ENCODE measurements at regions of chr11 and their contacts with region 1.

Region 1: DNA sequence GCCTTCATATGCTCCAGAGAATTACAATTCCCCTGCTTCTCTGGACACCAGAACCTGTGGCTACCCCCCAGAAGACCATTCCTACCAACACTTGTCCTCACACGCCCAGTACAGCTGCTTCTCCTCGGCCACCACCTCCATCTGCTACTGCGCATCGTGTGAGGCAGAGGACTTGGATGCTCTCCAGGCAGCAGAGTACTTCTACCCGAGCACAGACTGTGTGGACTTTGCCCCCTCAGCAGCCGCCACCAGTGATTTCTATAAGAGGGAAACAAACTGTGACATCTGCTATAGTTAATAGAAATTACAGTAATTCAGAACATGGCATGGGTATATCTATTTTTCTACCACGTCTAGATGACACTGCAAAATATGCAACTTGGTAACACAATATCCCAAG is 9.8 kb downstream of the POU2AF3 start:
- DNase-seq: no peak
- ATAC-seq: peak; percentile 74

Region 2: DNA sequence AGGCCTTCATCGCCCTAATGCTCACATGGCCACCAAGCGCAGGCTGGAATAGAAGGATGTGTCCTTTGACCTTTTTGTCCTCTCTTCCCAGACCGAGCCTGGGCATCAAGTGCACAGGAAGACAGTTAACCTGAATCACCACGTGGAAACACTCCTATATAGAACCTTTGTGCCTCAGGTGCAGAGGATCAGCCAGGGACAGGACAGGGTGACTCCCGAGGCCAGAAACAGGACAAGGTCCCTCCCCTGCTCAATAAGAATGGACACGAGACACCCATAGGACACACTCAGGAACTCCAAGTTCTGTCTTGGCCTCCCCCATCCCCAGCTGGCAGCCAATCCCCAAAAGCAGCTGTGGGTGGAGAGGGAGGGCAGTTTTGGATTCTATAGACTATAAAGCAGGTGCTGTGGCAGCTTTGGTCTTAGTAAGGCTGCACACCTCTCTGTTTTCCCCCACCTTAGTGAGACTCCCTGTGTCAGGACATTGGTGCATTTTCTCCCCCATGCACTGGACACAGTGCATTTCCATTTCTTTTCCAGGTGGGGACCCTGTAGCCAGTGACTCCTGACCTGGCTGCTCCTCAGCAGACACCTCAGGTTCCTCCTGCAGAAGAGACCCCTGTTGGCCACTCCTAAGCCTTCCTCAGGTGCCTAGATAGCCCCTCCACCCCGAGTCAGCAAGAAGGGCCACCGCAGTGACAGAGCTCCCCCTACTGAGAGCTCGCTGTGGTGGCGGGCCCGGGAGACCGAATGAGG is 114.5 kb after region 1 on chr11:
- intact Hi-C with region 1: loop called (anchors 5 kb)
- DNase-seq: peak; percentile 66
- ATAC-seq: peak; percentile 90

Measured in Right ventricle myocardium superior (tissue), 1 donor.